Calu3 (cell line): ENCODE measurements at regions of chr1 and their contacts with region 1.

Region 1: GRCh38 chr1:81414488-81415015 is 386.2 kb upstream of the ADGRL2 start:
- DNase-seq: peak; percentile 82
- H3K4me3 Mint-ChIP-seq: no peak overlapping the region
- H3K27ac Mint-ChIP-seq: no peak overlapping the region
- H3K4me1 Mint-ChIP-seq: peaks cover 11% of the 10 kb centered on the region
- H3K27me3 Mint-ChIP-seq: no peaks in the 10 kb centered on the region
- CTCF ChIP-seq: peak; percentile 89

Region 2: DNA sequence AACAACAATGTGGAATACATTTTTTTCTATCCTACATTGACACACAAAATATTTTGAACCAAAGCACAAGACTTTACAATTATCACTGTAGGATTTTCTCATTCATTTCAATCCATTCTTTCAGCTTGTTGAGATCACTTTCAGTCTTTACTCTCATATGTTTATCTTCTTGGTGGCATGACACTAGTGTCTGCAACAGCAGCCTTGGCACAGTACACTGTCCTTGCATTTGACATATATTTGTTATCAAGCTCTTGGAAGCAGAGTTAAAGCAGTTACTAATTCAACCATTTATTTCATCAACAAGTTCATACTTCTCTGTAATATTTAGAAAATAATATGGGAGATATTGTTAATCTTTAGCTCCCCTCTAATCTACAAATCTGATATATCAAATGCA is 536.2 kb before region 1 on chr1:
- CTCF ChIA-PET with region 1: no interaction called
- intact Hi-C with region 1: no loop called
- DNase-seq: no peak
- H3K4me3 Mint-ChIP-seq: no peak overlapping the region
- H3K27ac Mint-ChIP-seq: no peak overlapping the region
- H3K4me1 Mint-ChIP-seq: peaks cover 14% of the 10 kb centered on the region
- H3K27me3 Mint-ChIP-seq: no peaks in the 10 kb centered on the region
- CTCF ChIP-seq: no peak

Region 3: DNA sequence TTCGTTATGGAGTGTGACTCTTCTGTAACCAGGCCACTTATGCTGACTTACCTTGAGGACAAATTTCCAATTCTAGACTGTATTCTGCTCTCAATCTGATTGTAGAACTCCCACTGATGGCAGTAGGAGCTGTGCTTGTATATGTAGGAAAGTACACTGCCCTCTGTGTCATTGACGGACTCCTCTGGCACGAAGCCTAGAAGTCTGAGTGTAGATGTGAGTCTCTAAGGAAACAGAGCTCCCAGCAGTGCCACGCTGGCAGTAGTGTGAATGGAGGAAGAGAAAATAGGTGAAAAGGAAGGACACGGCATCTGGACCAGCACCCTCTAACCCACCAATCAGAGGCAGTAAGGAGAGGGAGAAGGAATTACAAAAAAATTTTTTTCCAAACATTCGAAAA is 255.7 kb after region 1 on chr1:
- CTCF ChIA-PET with region 1: no interaction called
- intact Hi-C with region 1: loop called (anchors 10 kb)
- DNase-seq: peak; percentile 76
- H3K4me3 Mint-ChIP-seq: peak overlapping the region; percentile 16
- H3K27ac Mint-ChIP-seq: peak overlapping the region; percentile 80
- H3K4me1 Mint-ChIP-seq: peaks cover 11% of the 10 kb centered on the region
- H3K27me3 Mint-ChIP-seq: no peaks in the 10 kb centered on the region
- CTCF ChIP-seq: no peak

Region 4: GRCh38 chr1:81760477-81761097 is 346.0 kb after region 1 on chr1:
- CTCF ChIA-PET with region 1: no interaction called
- intact Hi-C with region 1: loop called (anchors 5 kb)
- DNase-seq: no peak
- H3K4me3 Mint-ChIP-seq: no peak overlapping the region
- H3K27ac Mint-ChIP-seq: no peak overlapping the region
- H3K4me1 Mint-ChIP-seq: peaks cover 9% of the 10 kb centered on the region
- H3K27me3 Mint-ChIP-seq: no peaks in the 10 kb centered on the region
- CTCF ChIP-seq: no peak